ENCODE measurements at regions of chr10 and their contacts with region 1.

Region 1: DNA sequence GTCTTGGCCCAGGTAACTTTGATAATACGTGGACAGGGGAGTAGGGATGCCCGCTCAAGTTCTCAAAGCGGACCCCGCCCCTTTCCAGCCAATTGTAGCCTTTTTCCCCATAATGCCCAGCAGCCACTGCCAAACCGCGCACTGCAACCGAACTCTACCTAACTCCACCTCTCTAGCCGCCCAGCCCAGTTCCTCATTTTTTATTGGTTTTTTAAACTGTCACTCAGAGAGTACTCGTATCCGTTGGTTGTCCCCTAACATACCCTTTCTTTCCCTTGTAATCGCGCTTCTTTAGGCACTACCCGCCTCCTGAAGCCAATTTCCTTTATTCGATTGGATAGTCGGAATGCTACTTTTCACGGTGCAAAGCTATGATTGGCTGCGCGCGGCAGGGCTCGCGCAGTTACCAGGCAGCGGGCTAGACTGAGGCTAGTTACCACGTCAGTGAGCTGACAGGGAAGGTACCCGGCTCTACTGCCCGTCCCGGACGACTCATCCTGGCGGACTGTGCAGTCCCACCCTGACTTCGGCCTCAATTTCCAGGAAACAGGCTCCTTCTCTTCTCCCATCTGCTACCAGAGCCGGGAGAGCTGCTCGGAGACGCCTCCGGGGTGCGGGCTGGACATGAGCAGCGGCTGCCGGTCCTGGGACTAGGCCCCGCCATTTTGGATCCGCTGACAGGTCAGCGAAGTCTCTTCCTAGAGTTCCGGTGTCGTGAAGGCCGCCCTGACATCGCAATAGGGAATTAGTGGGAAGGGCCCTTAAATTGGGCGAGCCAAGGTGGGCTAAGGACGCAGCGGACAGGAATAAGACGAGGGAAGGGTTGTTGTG is at the start of gene GBF1:
- DNase-seq: peak; percentile 63 to 97 (median 87)
- ATAC-seq: peak; percentile 88 to 92 (median 88)
- H3K4me3 ChIP-seq: peak within 1 kb of the TSS; percentile 71 to 93
- H3K4me3 Mint-ChIP-seq: peak within 1 kb of the TSS; percentile 94 to 98 (median 97)
- H3K27ac ChIP-seq: peak within 1 kb of the TSS; percentile 63
- H3K27ac Mint-ChIP-seq: peak within 1 kb of the TSS; percentile 88 to 89
- H3K4me1 ChIP-seq: peaks cover 28 to 44% of the 10 kb centered on the region in 2 experiments
- H3K4me1 Mint-ChIP-seq: peaks cover 53 to 64% (median 54%) of the 10 kb centered on the region in 3 donors
- H3K27me3 ChIP-seq: peaks cover 2 to 29% of the 10 kb centered on the region in 2 experiments
- H3K27me3 Mint-ChIP-seq: peaks cover 15 to 25% of the 10 kb centered on the region in 2 donors
- total RNA-seq, gene GBF1: 37.2 to 41.1 (median 38.7) TPM

Region 2: DNA sequence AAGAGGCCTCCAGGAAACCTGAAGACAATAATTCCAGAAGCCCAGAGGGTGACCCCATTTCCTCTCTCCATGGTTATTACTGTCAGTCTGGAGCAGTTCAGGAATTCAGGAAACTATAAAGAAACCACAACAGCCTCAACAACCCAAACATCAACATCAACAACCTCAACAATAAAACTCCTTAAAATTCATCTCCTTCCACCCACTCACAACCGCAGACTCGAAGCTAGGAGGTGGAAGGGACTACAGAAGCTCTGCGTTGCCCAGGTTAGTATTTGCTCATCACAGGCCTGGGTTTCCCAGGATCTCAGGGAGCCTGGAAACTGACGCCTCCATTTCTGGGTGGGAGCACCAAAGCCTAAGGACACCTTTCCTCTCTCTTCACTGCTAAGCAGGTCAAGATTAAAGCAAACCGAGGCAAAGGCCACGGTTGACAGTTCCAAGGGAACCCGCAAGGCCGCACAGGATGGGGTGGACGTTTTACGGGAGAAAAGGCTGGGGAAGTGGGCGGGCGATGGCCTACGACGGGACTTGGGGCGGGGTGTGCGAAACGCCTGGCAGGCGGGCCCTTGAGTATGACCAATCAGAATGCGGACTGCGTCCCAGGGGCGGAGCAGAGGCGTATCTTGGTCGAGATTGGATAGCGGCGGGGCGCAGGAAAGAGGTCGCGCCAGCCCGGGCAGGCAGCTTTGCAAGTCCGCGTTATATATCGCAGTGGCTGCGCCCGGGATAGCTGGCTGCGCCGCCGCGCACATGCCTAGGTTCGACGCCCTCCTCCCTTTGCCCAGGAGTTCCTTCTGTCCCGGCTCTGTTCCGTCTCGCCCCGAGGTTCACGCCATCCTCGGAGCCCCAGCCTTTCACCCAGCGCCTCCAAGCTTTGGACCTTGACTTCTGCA is 19.4 kb before region 1 on chr10 and contains the start of gene ELOVL3:
- CTCF ChIA-PET with region 1: interaction called in 1 of 2 experiments, 38 read pairs
- POLR2A ChIA-PET with region 1: interaction called in 1 of 2 experiments, 4 read pairs
- DNase-seq: peak; percentile 62 to 91 (median 80)
- ATAC-seq: peak; percentile 88 to 94 (median 92)
- H3K4me3 ChIP-seq: peak within 1 kb of the TSS; percentile 17 to 39
- H3K4me3 Mint-ChIP-seq: peak within 1 kb of the TSS; percentile 71 to 75 (median 71)
- H3K27ac ChIP-seq: no peak within 1 kb of the TSS
- H3K27ac Mint-ChIP-seq: peak within 1 kb of the TSS in 1 of 2 donors; percentile 17
- H3K4me1 ChIP-seq: peaks cover 2 to 27% of the 10 kb centered on the region in 2 experiments
- H3K4me1 Mint-ChIP-seq: peaks cover 18 to 25% (median 24%) of the 10 kb centered on the region in 3 donors
- H3K27me3 ChIP-seq: peaks cover 2 to 61% of the 10 kb centered on the region in 2 experiments
- H3K27me3 Mint-ChIP-seq: peaks cover 28 to 49% of the 10 kb centered on the region in 2 donors
- total RNA-seq, gene ELOVL3: not detected

Region 3: GRCh38 chr10:102268375-102268888 is 23.1 kb after region 1 on chr10:
- CTCF ChIA-PET with region 1: no interaction called
- POLR2A ChIA-PET with region 1: interaction called in 1 of 2 experiments, 10 read pairs
- DNase-seq: no peak
- ATAC-seq: no peak
- H3K4me3 ChIP-seq: no peak overlapping the region
- H3K4me3 Mint-ChIP-seq: no peak overlapping the region
- H3K27ac ChIP-seq: no peak overlapping the region
- H3K27ac Mint-ChIP-seq: peak overlapping the region in 1 of 2 donors; percentile 22
- H3K4me1 ChIP-seq: peaks cover 0 to 9% of the 10 kb centered on the region in 2 experiments
- H3K4me1 Mint-ChIP-seq: peaks cover 47 to 66% (median 60%) of the 10 kb centered on the region in 3 donors
- H3K27me3 ChIP-seq: no peaks in the 10 kb centered on the region
- H3K27me3 Mint-ChIP-seq: no peaks in the 10 kb centered on the region

Region 4: DNA sequence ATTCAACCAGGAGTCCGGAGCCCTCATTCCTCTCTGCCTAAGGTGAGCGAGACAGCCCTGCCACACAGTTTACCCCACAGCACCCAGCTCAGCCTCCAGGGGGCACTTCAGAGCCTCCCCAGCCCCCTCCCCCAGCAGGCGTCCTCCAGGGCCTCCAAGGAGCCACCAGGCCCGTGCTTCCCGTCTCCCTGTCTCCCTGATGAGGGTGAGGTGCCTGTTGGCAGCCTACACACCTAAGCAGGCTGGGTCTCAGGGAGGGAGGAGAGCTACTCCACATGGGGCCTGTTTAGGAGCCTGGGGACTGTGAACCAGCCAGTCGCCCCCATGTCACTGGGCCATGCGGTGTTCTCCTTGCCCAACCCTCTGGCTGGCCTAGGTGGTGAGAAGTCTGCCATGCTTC is 370.0 kb after region 1 on chr10:
- CTCF ChIA-PET with region 1: no interaction called
- POLR2A ChIA-PET with region 1: no interaction called
- DNase-seq: peak in 6 of 35 experiments; percentile 7 to 43 (median 14)
- ATAC-seq: no peak
- H3K4me3 ChIP-seq: no peak overlapping the region
- H3K4me3 Mint-ChIP-seq: no peak overlapping the region
- H3K27ac ChIP-seq: no peak overlapping the region
- H3K27ac Mint-ChIP-seq: no peak overlapping the region
- H3K4me1 ChIP-seq: peaks cover 28 to 37% of the 10 kb centered on the region in 2 experiments
- H3K4me1 Mint-ChIP-seq: peaks cover 30 to 36% (median 31%) of the 10 kb centered on the region in 3 donors
- H3K27me3 ChIP-seq: no peaks in the 10 kb centered on the region
- H3K27me3 Mint-ChIP-seq: no peaks in the 10 kb centered on the region

Region 5: DNA sequence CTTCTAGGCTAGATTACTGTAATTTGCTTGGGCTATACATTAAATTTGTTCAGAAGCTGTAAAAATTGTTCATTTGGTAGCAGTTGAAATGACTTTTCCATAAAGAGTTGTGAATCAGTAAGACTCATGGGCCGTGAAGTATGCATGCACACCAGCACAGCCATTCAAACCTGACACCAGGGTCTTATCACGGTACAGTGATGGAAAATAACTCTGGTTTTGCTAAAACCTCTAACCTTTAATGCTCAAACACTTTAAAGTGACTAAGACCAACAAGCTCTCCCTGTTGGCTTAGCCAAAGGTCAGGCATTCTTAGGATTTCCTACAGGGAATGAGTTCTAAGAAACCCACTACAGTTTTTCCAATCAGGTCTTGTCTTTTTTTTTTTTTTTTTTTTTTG is 457.4 kb after region 1 on chr10:
- CTCF ChIA-PET with region 1: no interaction called
- POLR2A ChIA-PET with region 1: interaction called in 1 of 2 experiments, 10 read pairs
- DNase-seq: no peak
- ATAC-seq: no peak
- H3K4me3 ChIP-seq: no peak overlapping the region
- H3K4me3 Mint-ChIP-seq: no peak overlapping the region
- H3K27ac ChIP-seq: no peak overlapping the region
- H3K27ac Mint-ChIP-seq: no peak overlapping the region
- H3K4me1 ChIP-seq: peaks cover 0 to 2% of the 10 kb centered on the region in 2 experiments
- H3K4me1 Mint-ChIP-seq: peaks cover 0 to 10% (median 10%) of the 10 kb centered on the region in 3 donors
- H3K27me3 ChIP-seq: no peaks in the 10 kb centered on the region
- H3K27me3 Mint-ChIP-seq: no peaks in the 10 kb centered on the region